GM12878 (cell line): ENCODE measurements at regions of chr1 and their contacts with region 1.

Region 1: GRCh38 chr1:78617615-78618026 is 2.6 kb upstream of the IFI44L start:
- DNase-seq: peak; percentile 60
- ATAC-seq: peak; percentile 54
- H3K4me3 ChIP-seq: no peak overlapping the region
- H3K27ac ChIP-seq: peak overlapping the region; percentile 61; the same call in 1 of the 2 replicates
- H3K4me1 ChIP-seq: peaks cover 20% of the 10 kb centered on the region
- H3K27me3 ChIP-seq: no peaks in the 10 kb centered on the region
- CTCF ChIP-seq: peak; percentile 81 to 95 (median 87); a peak in 5 of 6 replicates
- EP300 ChIP-seq: no peak
- POLR2A ChIP-seq: no peak
- RAD21 ChIP-seq: peak; percentile 95

Region 2: GRCh38 chr1:77978969-77979876 is 638.4 kb before region 1 on chr1 and contains the start of gene FUBP1:
- CTCF ChIA-PET with region 1: interaction called, 4 read pairs
- POLR2A ChIA-PET with region 1: interaction called, 4 read pairs
- RAD21 ChIA-PET with region 1: interaction called, 4 read pairs
- SMC1A ChIA-PET with region 1: interaction called, 3 read pairs
- in situ Hi-C with region 1: no loop called
- intact Hi-C with region 1: loop called (anchors 2 kb)
- DNase-seq: peak; percentile 99
- ATAC-seq: peak; percentile 78
- H3K4me3 ChIP-seq: peak within 1 kb of the TSS; percentile 95
- H3K27ac ChIP-seq: peak within 1 kb of the TSS; percentile 100
- H3K4me1 ChIP-seq: no peaks in the 10 kb centered on the region; the same call in 1 of the 2 replicates
- H3K27me3 ChIP-seq: no peaks in the 10 kb centered on the region
- CTCF ChIP-seq: peak; percentile 77 to 84 (median 81)
- EP300 ChIP-seq: no peak
- POLR2A ChIP-seq: peak; percentile 96
- RAD21 ChIP-seq: peak; percentile 15; the same call in 1 of the 2 replicates
- polyA plus RNA-seq, gene FUBP1: 110 to 114 TPM

Region 3: DNA sequence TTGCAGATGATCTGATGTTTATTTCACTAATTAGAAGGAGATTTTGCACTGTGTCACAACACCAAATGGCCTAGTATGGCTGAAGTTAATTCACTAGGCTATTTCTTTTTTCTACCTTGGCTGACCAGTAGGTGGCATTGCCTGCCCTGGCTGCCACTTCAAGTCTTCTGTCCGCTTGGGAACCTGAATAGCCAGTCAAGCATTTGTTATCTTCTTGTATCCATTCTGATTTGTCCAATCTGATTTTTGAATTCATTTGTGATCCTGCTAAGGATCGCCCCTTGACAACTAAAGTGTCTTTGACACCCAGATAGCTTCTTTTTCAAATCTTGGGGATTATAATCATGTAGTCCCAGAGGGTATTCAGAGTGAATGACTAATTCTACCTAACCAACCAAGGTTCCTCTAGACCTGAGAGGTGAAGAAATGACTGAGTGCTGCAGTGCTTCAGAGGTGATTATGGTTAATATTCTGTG is 472.5 kb before region 1 on chr1:
- CTCF ChIA-PET with region 1: interaction called, 11 read pairs
- POLR2A ChIA-PET with region 1: no interaction called
- RAD21 ChIA-PET with region 1: no interaction called
- SMC1A ChIA-PET with region 1: interaction called, 7 read pairs
- in situ Hi-C with region 1: no loop called
- intact Hi-C with region 1: no loop called
- DNase-seq: no peak
- ATAC-seq: peak; percentile 85
- H3K4me3 ChIP-seq: no peak overlapping the region
- H3K27ac ChIP-seq: no peak overlapping the region
- H3K4me1 ChIP-seq: peaks cover 16% of the 10 kb centered on the region
- H3K27me3 ChIP-seq: no peaks in the 10 kb centered on the region
- CTCF ChIP-seq: peak; percentile 83 to 88 (median 87)
- EP300 ChIP-seq: no peak
- POLR2A ChIP-seq: no peak
- RAD21 ChIP-seq: peak; percentile 85

Region 4: DNA sequence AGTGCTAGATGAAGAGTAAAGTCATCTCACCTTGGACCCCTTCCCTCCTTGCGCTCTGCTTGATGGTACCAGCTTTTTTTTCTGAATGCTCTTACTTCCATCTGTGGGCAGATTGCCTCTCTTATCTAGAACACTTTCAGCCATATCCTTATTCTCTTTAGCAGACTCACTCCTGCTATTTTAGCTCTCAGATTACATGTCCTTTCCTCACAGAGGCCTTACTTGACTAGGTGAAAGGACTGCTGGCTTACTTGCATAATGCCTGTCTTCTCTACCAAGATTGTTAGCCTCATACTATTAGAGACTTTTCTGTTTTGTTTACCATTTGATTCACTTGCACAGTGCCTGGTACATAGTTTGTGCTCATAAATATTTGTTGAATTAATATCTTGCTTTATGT is 41.3 kb after region 1 on chr1:
- CTCF ChIA-PET with region 1: interaction called, 11 read pairs
- POLR2A ChIA-PET with region 1: interaction called, 15 read pairs
- RAD21 ChIA-PET with region 1: interaction called, 15 read pairs
- SMC1A ChIA-PET with region 1: interaction called, 16 read pairs
- in situ Hi-C with region 1: loop called (anchors 5 kb)
- intact Hi-C with region 1: no loop called
- DNase-seq: no peak
- ATAC-seq: no peak
- H3K4me3 ChIP-seq: no peak overlapping the region
- H3K27ac ChIP-seq: no peak overlapping the region
- H3K4me1 ChIP-seq: no peaks in the 10 kb centered on the region
- H3K27me3 ChIP-seq: no peaks in the 10 kb centered on the region
- CTCF ChIP-seq: no peak
- EP300 ChIP-seq: no peak
- POLR2A ChIP-seq: no peak
- RAD21 ChIP-seq: no peak

Region 5: DNA sequence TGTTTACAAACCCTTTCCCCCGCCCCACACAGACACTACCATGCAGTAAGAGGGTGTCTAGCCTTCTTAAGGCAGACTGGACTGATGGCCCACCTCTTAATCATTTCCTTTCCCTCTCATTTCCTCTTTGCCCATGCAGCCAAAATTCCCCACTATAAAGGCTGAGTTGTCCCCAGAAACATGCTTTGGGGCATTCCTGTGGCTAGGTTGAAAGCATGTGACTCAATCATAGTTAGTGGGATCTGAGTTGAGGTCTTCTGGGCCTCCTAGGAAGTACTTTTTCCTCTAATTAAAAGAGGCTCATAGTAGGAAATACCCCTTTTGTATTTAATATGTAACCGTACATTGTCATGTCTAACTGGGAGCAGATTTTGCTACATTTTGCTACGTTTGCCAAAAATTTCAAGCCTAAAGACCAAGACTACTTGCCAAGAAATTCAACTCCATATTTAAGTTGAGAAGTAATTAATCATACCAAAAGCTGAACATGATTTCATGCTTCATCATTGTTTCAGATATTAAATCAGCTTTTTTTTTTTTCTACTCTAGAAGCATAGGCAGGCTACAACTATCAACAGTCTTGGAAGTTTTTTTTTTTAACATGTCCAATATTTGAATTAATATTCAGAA is 214.2 kb after region 1 on chr1:
- CTCF ChIA-PET with region 1: interaction called, 4 read pairs
- POLR2A ChIA-PET with region 1: no interaction called
- RAD21 ChIA-PET with region 1: interaction called, 3 read pairs
- SMC1A ChIA-PET with region 1: interaction called, 4 read pairs
- in situ Hi-C with region 1: no loop called
- intact Hi-C with region 1: loop called (anchors 1 kb)
- DNase-seq: no peak
- ATAC-seq: peak; percentile 77
- H3K4me3 ChIP-seq: no peak overlapping the region
- H3K27ac ChIP-seq: no peak overlapping the region
- H3K4me1 ChIP-seq: no peaks in the 10 kb centered on the region
- H3K27me3 ChIP-seq: no peaks in the 10 kb centered on the region
- CTCF ChIP-seq: no peak
- EP300 ChIP-seq: no peak
- POLR2A ChIP-seq: no peak
- RAD21 ChIP-seq: no peak

Region 6: DNA sequence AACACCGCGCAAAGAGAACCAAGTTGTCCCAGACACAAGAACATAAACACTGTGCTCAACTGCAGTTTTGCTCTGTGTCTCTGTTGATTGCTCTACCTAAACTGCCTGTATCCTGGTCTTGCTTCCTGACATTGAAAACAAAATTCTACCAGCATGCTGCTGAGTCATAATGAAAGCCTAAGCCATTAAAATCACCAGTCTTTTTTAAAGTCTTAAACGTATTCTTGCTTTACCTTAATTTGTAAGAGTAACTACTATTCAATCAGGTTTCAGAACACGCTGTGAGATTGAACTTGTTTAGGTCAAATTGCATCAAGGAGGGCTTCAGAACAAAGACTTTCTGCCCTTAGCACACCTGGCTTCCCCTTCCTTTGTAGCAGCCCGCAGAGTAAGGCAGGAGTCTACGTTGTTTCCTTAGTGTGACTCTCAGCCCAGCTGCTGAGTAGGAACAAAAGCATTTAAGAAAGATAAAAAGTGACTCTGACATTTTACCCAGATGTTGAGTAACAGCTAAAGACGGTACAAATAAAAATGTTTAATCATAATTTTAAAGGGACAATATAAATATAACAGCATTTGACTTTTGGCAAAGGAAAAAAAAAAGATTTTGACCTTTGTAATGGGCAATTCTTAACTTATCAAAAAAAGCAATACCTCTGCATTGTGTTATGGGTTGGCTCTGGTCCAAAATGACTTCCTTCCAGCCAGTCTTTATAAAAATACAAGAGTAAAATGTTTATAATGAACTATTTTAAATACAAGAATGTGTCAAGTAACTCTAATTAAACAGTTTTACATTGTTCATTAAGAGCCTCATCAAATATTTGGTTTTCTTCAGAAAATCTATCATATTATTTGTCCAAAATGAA is 575.8 kb after region 1 on chr1:
- CTCF ChIA-PET with region 1: no interaction called
- POLR2A ChIA-PET with region 1: no interaction called
- RAD21 ChIA-PET with region 1: no interaction called
- SMC1A ChIA-PET with region 1: no interaction called
- in situ Hi-C with region 1: no loop called
- intact Hi-C with region 1: loop called (anchors 5 kb)
- DNase-seq: peak; percentile 41
- ATAC-seq: peak; percentile 78
- H3K4me3 ChIP-seq: no peak overlapping the region
- H3K27ac ChIP-seq: no peak overlapping the region
- H3K4me1 ChIP-seq: no peaks in the 10 kb centered on the region
- H3K27me3 ChIP-seq: no peaks in the 10 kb centered on the region
- CTCF ChIP-seq: no peak
- EP300 ChIP-seq: no peak
- POLR2A ChIP-seq: no peak
- RAD21 ChIP-seq: no peak